T-cell (primary cell): ENCODE measurements at regions of chr6 and their contacts with region 1.

Region 1: GRCh38 chr6:26054857-26055669 is 32.2 kb upstream of the HFE start:
- DNase-seq: peak; percentile 63 to 95 (median 86)
- ATAC-seq: peak; percentile 60 to 73 (median 67)
- H3K4me3 ChIP-seq: peak overlapping the region; percentile 87 to 98
- H3K4me3 Mint-ChIP-seq: peak overlapping the region; percentile 95 to 97 (median 96)
- H3K27ac ChIP-seq: peak overlapping the region; percentile 96
- H3K27ac Mint-ChIP-seq: peak overlapping the region; percentile 97 to 100
- H3K4me1 ChIP-seq: peaks cover 16 to 26% of the 10 kb centered on the region in 2 experiments
- H3K4me1 Mint-ChIP-seq: peaks cover 21 to 26% (median 23%) of the 10 kb centered on the region in 3 donors
- H3K27me3 ChIP-seq: no peaks in the 10 kb centered on the region
- H3K27me3 Mint-ChIP-seq: no peaks in the 10 kb centered on the region

Region 2: DNA sequence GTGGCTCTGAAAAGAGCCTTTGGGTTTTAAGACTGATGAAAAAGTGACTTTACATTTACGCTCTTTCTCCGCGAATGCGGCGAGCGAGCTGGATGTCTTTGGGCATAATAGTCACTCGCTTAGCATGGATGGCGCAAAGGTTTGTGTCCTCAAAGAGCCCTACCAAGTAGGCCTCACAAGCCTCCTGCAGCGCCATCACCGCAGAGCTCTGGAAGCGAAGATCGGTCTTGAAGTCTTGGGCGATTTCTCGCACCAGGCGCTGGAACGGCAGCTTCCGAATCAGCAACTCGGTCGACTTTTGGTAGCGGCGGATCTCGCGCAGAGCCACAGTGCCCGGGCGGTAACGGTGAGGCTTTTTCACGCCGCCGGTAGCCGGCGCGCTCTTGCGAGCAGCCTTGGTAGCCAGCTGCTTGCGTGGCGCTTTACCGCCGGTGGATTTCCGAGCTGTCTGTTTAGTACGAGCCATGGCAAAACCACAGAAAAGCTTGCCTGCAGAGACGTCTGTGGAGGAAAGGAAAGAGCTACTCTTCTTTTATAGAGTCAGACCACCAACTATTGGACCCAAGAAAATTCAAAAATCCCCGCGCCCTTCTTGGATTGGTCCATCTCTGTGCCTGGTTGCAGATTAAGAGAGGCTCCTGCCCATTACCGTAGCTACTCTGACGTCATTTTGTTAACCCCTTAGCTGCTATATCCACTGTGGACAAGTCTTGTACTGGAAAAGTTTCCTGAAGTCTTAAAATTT is 23.3 kb before region 1 on chr6:
- CTCF ChIA-PET with region 1: interaction called in 1 of 2 experiments, 19 read pairs
- POLR2A ChIA-PET with region 1: interaction called, 5 to 29 read pairs
- DNase-seq: peak; percentile 61 to 95 (median 87)
- ATAC-seq: peak; percentile 68 to 72 (median 70)
- H3K4me3 ChIP-seq: peak overlapping the region; percentile 61 to 84
- H3K4me3 Mint-ChIP-seq: peak overlapping the region; percentile 90 to 95 (median 92)
- H3K27ac ChIP-seq: peak overlapping the region; percentile 74
- H3K27ac Mint-ChIP-seq: peak overlapping the region; percentile 94 to 98
- H3K4me1 ChIP-seq: peaks cover 30 to 32% of the 10 kb centered on the region in 2 experiments
- H3K4me1 Mint-ChIP-seq: peaks cover 48 to 53% (median 50%) of the 10 kb centered on the region in 3 donors
- H3K27me3 ChIP-seq: no peaks in the 10 kb centered on the region
- H3K27me3 Mint-ChIP-seq: peaks cover 0 to 2% of the 10 kb centered on the region in 2 donors

Region 3: DNA sequence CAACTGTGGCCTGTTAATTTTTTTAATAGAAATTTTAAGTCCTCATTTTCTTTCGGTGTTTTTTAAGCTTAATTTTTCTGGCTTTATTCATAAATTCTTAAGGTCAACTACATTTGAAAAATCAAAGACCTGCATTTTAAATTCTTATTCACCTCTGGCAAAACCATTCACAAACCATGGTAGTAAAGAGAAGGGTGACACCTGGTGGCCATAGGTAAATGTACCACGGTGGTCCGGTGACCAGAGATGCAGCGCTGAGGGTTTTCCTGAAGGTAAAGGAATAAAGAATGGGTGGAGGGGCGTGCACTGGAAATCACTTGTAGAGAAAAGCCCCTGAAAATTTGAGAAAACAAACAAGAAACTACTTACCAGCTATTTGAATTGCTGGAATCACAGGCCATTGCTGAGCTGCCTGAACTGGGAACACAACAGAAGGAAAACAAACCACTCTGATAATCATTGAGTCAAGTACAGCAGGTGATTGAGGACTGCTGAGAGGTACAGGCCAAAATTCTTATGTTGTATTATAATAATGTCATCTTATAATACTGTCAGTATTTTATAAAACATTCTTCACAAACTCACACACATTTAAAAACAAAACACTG is 42.3 kb after region 1 on chr6:
- CTCF ChIA-PET with region 1: interaction called, 6 to 13 read pairs
- POLR2A ChIA-PET with region 1: interaction called in 1 of 2 experiments, 6 read pairs
- DNase-seq: peak in 34 of 35 experiments; percentile 26 to 87 (median 54)
- ATAC-seq: peak; percentile 78 to 84 (median 82)
- H3K4me3 ChIP-seq: no peak overlapping the region
- H3K4me3 Mint-ChIP-seq: no peak overlapping the region
- H3K27ac ChIP-seq: no peak overlapping the region
- H3K27ac Mint-ChIP-seq: no peak overlapping the region
- H3K4me1 ChIP-seq: no peaks in the 10 kb centered on the region
- H3K4me1 Mint-ChIP-seq: peaks cover 4 to 7% (median 6%) of the 10 kb centered on the region in 3 donors
- H3K27me3 ChIP-seq: peaks cover 0 to 4% of the 10 kb centered on the region in 2 experiments
- H3K27me3 Mint-ChIP-seq: peaks cover 0 to 3% of the 10 kb centered on the region in 2 donors